ENCODE measurements at regions of chr4 and their contacts with region 1.

Region 1: DNA sequence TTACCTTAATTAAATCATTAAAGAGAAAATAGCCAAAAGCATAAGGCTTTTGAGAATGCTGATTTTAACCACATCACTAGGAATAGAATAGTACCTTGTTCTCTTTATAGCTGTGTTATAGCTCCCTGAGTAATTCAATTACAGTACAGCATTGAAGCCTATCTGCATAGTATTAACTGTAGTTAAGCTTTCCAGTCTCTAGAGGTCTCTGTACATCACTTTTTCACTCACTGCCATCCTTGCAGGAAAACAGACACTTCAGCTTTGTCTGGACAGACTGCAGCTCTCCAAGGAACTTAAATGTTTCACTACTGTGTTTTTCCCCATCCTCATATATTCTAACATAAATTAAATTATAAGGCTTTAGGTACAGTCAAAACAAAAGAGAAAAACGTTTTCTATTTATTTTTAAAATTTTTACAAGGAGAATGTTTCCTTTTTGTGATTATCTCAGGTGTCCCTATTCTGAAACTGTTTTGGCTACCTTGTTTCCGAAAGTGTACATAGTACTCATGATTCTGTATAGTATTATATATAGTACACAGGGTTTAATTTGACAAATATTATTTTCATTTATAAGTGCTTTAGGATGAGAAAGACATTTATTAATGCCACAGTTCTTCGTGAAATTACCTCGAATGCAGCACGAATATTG is 407.9 kb downstream of the PCDH18 start:
- DNase-seq: no peak
- H3K4me3 ChIP-seq: peak overlapping the region; percentile 46 to 56
- H3K27ac ChIP-seq: no peak overlapping the region
- H3K4me1 ChIP-seq: no peaks in the 10 kb centered on the region
- H3K27me3 ChIP-seq: no peaks in the 10 kb centered on the region
- CTCF ChIP-seq: peak; percentile 50 to 75 (median 69)

Region 2: DNA sequence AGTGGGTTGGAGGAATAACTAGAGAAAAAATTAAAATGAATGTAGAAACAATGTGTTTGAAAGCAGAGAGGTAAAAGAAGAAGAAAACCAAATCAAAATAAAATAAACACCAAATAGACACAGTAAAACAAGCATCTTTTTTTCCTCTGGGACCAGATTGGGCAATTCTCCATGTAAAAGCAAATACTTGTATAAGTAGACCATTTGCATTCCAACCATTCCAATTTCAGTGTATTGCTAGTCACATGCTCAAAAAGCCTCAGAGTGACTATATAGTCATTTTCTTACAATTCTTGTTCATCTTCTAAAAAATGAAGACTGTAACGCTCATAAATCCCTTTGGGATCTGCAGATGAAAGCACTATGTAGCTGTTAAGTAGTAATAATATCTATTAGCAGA is 561.6 kb before region 1 on chr4:
- intact Hi-C with region 1: no loop called
- DNase-seq: no peak
- H3K4me3 ChIP-seq: no peak overlapping the region
- H3K27ac ChIP-seq: no peak overlapping the region
- H3K4me1 ChIP-seq: no peaks in the 10 kb centered on the region
- H3K27me3 ChIP-seq: no peaks in the 10 kb centered on the region
- CTCF ChIP-seq: no peak

Region 3: DNA sequence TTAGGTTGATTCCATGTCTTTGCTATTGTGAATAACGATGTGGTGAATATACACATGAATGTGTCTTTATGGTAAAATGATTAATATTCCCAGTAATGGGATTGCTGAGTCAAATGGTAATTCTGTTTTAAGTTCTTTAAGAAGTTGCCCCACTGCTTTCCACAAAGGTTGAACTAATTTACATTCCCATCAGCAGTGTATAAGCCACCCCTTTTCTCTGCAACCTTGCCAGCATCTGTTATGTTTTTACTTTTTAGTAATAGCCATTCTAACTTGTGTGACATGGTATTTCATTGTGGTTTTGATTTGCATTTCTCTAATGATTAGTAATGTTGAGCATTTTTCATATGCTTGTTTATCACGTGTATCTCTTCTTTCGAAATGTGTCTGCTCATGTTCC is 95.4 kb before region 1 on chr4:
- intact Hi-C with region 1: no loop called
- DNase-seq: no peak
- H3K4me3 ChIP-seq: no peak overlapping the region
- H3K27ac ChIP-seq: no peak overlapping the region
- H3K4me1 ChIP-seq: no peaks in the 10 kb centered on the region
- H3K27me3 ChIP-seq: no peaks in the 10 kb centered on the region
- CTCF ChIP-seq: no peak

Region 4: DNA sequence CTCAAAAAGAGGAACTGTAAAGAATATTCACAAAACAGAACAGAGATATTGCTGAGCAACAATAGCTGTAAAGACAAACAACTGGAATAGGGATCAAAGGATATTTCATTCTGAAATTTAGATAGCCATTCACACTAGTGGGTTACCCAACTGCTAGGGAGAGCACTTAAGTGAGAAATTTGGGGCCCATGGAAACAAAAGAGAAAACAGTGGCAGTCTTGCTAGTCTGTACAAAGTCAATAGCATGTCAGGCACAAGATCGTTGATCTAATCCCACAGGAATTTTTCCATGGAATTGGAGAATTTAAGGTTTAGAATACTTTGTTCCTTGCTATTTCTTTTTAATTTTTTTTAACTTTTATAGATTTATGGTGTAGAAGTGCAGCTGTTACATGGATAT is 59.1 kb before region 1 on chr4:
- intact Hi-C with region 1: no loop called
- DNase-seq: no peak
- H3K4me3 ChIP-seq: no peak overlapping the region
- H3K27ac ChIP-seq: no peak overlapping the region
- H3K4me1 ChIP-seq: no peaks in the 10 kb centered on the region
- H3K27me3 ChIP-seq: no peaks in the 10 kb centered on the region
- CTCF ChIP-seq: no peak

Region 5: DNA sequence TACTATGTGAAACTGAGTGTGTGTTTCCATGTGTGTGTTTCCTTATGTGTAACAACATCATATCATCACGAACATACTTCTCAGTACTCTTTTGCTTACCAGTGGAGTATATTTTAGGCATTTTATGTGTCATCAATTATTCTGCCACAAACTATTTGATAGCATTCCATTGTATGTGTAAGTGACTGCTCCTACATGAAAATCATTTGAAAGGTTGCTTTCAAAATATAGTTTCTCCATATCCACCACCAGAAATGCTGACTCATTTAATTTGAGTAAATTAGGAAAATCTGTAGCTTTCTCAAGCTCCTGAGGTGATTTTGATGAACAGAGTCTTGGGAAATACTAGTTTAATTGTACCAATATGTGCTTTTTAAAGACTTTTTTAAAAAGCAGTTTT is 31.6 kb after region 1 on chr4:
- intact Hi-C with region 1: no loop called
- DNase-seq: no peak
- H3K4me3 ChIP-seq: no peak overlapping the region
- H3K27ac ChIP-seq: no peak overlapping the region
- H3K4me1 ChIP-seq: no peaks in the 10 kb centered on the region
- H3K27me3 ChIP-seq: no peaks in the 10 kb centered on the region
- CTCF ChIP-seq: no peak

Region 6: GRCh38 chr4:137370206-137370633 is 245.8 kb after region 1 on chr4:
- intact Hi-C with region 1: loop called (anchors 10 kb)
- DNase-seq: no peak
- H3K4me3 ChIP-seq: no peak overlapping the region
- H3K27ac ChIP-seq: peak overlapping the region; percentile 8 to 32
- H3K4me1 ChIP-seq: peaks cover 0 to 14% of the 10 kb centered on the region in 2 donors
- H3K27me3 ChIP-seq: no peaks in the 10 kb centered on the region
- CTCF ChIP-seq: no peak

Region 7: DNA sequence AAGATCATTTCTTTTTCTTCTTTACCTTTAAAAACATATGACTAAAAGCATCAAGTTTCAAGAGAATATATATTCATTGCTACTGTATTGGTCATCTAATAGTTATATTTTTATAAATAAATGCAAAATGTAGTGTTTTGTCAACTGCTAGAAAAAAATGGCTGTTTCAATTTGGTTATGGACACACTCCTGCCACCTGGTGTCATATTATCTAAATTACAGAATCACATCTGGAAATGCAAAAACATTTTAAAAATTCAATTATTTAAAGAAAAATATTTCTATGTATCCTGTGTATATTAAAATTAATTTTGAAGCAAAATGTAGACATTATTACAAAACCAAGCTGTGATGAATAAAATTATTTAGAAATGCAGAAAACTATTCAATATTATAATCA is 737.3 kb after region 1 on chr4:
- intact Hi-C with region 1: loop called (anchors 2 kb)
- DNase-seq: no peak
- H3K4me3 ChIP-seq: no peak overlapping the region
- H3K27ac ChIP-seq: no peak overlapping the region
- H3K4me1 ChIP-seq: no peaks in the 10 kb centered on the region
- H3K27me3 ChIP-seq: no peaks in the 10 kb centered on the region
- CTCF ChIP-seq: peak; percentile 32 to 67 (median 55)

Region 8: GRCh38 chr4:138090150-138090917 is 965.9 kb after region 1 on chr4:
- intact Hi-C with region 1: loop called (anchors 2 kb)
- DNase-seq: peak in 1 of 2 donors; percentile 68
- H3K4me3 ChIP-seq: peak overlapping the region; percentile 39 to 48
- H3K27ac ChIP-seq: no peak overlapping the region
- H3K4me1 ChIP-seq: peaks cover 2% of the 10 kb centered on the region in 2 donors
- H3K27me3 ChIP-seq: no peaks in the 10 kb centered on the region
- CTCF ChIP-seq: peak; percentile 50 to 79 (median 73)